Natural killer cell (primary cell): ENCODE measurements at regions of chrX and their contacts with region 1.

Region 1: DNA sequence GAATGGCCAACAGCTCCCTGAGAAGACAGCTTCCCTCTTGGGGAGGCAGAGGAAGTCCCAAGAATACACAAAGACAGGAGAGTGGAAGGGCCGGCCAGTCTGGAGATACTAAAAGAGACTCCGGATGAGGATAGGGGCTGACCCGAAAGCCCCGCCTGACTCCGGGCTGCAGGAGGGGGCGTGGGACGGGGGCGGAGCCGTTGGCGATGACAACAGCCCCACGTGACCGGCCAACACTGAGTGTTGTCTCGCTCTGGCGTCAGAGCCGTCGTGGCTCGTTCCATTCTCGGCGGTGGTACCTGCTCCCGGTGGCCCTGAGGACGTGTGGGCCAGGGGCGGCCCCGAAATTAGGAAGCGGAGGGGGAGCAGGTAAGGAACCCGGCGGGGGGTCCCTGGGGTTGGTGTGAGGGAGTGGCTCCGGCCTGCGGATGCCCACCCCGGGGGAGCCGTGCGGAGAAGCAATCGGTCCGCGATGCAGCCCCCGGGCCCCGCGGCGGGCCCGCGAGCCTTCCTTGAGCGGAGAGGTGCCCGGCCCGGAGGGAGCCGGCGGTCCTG is at the start of gene BEX4:
- DNase-seq: peak; percentile 80 to 89
- ATAC-seq: peak; percentile 92 to 97 (median 94)
- H3K4me3 ChIP-seq: peak within 1 kb of the TSS; percentile 82
- H3K4me3 Mint-ChIP-seq: peak within 1 kb of the TSS; percentile 94
- H3K27ac ChIP-seq: peak within 1 kb of the TSS; percentile 95
- H3K27ac Mint-ChIP-seq: peak within 1 kb of the TSS; percentile 81 to 94
- H3K4me1 ChIP-seq: peaks cover 13% of the 10 kb centered on the region
- H3K4me1 Mint-ChIP-seq: peaks cover 0 to 11% of the 10 kb centered on the region in 2 donors
- H3K27me3 ChIP-seq: no peaks in the 10 kb centered on the region
- H3K27me3 Mint-ChIP-seq: peaks cover 1 to 18% of the 10 kb centered on the region in 2 donors
- CTCF ChIP-seq: no peak
- total RNA-seq, gene BEX4: 30.8 to 53.4 (median 47.1) TPM

Region 2: DNA sequence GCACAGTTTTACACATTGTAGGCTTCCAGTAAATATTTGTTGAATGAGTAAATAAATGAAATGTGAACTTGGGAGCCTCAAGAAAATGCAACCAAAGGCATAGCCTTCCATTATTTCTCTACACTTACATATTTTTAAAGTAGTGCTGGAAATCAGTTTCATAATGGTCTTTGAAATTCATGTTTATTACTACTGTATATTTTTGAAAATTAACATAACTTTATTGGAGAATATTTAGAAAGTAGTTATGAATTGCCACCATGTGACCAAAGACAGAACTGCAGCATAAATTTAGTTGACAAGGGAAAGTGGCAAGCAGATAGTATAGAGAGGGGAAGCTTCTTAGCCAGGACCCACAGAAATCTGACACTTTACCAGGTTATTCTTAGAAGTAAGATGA is 33.6 kb after region 1 on chrX:
- intact Hi-C with region 1: loop called (anchors 1 kb)
- DNase-seq: peak in 1 of 2 donors; percentile 52
- ATAC-seq: peak in 1 of 3 donors; percentile 49
- H3K4me3 ChIP-seq: no peak overlapping the region
- H3K4me3 Mint-ChIP-seq: no peak overlapping the region
- H3K27ac ChIP-seq: no peak overlapping the region
- H3K27ac Mint-ChIP-seq: no peak overlapping the region
- H3K4me1 ChIP-seq: peaks cover under 1% of the 10 kb centered on the region
- H3K4me1 Mint-ChIP-seq: peaks cover 2 to 7% of the 10 kb centered on the region in 2 donors
- H3K27me3 ChIP-seq: no peaks in the 10 kb centered on the region
- H3K27me3 Mint-ChIP-seq: peaks cover 2 to 16% of the 10 kb centered on the region in 2 donors
- CTCF ChIP-seq: peak; percentile 42

Region 3: GRCh38 chrX:103254921-103255493 is 40.1 kb after region 1 on chrX and contains the start of gene TCEAL8:
- intact Hi-C with region 1: loop called (anchors 2 kb)
- DNase-seq: peak; percentile 45 to 84
- ATAC-seq: peak; percentile 88 to 92 (median 91)
- H3K4me3 ChIP-seq: peak within 1 kb of the TSS; percentile 71
- H3K4me3 Mint-ChIP-seq: peak within 1 kb of the TSS; percentile 96
- H3K27ac ChIP-seq: peak within 1 kb of the TSS; percentile 81
- H3K27ac Mint-ChIP-seq: peak within 1 kb of the TSS; percentile 92 to 99
- H3K4me1 ChIP-seq: peaks cover 12% of the 10 kb centered on the region
- H3K4me1 Mint-ChIP-seq: peaks cover 20 to 21% of the 10 kb centered on the region in 2 donors
- H3K27me3 ChIP-seq: no peaks in the 10 kb centered on the region
- H3K27me3 Mint-ChIP-seq: peaks cover 0 to under 1% of the 10 kb centered on the region in 2 donors
- CTCF ChIP-seq: no peak
- total RNA-seq, gene TCEAL8: 17.2 to 26.5 (median 22.1) TPM

Region 4: DNA sequence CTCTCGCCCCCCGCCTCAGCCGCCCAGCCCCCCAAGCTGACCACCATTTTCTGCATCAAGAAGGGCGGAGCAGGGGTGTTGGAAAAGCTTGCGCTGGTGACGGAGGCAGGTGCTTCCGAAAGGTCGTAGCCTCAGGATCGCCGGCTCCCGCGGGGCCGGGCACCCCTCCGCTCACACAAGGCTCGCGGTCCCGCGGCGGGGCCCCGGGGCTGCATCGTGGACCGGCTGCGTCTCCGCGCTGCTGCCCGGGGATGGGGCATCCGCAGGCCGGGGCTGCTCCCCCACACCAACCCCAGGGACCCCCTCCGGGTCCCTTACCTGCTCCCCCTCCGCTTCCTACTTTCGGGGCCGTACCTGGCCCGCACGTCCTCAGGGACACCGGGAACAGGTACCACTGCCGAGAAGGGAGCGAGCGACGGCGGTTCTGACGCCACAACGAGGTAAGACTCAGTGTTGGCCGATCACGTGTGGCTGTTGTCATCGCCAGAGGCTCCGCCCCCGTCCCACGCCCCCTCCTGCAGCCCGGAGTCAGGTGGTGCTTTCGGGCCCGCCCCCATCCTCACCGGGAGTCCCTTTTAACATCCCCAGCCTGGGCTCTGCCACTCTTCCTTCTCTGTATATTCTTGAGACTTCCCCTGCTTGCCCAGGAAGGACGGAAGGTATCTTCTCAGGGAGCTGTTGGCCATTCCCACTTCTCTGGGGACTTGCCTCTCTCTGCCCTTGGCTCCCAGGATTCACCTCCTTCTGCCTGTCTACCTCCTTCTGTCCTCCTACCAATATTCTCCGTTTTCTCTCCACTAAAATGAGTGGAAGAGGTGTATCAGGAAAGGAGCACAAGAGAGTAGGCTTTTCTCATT is 95.8 kb after region 1 on chrX and contains the start of gene BEX2:
- intact Hi-C with region 1: loop called (anchors 10 kb)
- DNase-seq: peak; percentile 78 to 90
- ATAC-seq: peak; percentile 98 to 99 (median 99)
- H3K4me3 ChIP-seq: peak within 1 kb of the TSS; percentile 50
- H3K4me3 Mint-ChIP-seq: peak within 1 kb of the TSS; percentile 82
- H3K27ac ChIP-seq: peak within 1 kb of the TSS; percentile 53
- H3K27ac Mint-ChIP-seq: peak within 1 kb of the TSS in 1 of 2 donors; percentile 84
- H3K4me1 ChIP-seq: peaks cover 7% of the 10 kb centered on the region
- H3K4me1 Mint-ChIP-seq: peaks cover 0 to 5% of the 10 kb centered on the region in 2 donors
- H3K27me3 ChIP-seq: no peaks in the 10 kb centered on the region
- H3K27me3 Mint-ChIP-seq: peaks cover 0 to 8% of the 10 kb centered on the region in 2 donors
- CTCF ChIP-seq: no peak
- total RNA-seq, gene BEX2: 11.6 to 25.2 (median 16.8) TPM